ENCODE measurements at regions of chr3 and their contacts with region 1.

Region 1: DNA sequence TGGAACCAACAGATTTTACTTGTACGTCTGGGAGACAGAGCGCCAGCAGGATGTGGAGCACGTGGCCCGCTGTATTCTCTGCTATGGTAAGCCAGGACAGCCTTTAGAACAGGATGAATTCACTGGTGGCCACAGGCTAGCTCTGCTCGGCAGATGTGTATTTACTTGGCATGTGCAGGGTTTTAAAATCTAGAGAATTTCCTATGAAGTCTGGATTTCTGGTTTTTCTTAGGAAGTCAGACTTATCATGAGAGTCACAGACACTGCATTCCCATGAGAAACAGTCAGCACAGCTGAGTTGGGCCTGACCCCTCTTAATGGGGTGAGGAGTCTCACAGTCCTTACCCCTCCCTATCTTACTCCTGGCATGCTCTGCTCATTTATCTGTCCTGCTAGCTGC is 84.6 kb upstream of the COL6A5 start:
- DNase-seq: no peak
- H3K4me3 ChIP-seq: no peak overlapping the region
- H3K27me3 ChIP-seq: 0 out of 2 replicates have a peak, but pooled peaks cover 1% of the 10 kb centered on the region
- CTCF ChIP-seq: no peak

Region 2: DNA sequence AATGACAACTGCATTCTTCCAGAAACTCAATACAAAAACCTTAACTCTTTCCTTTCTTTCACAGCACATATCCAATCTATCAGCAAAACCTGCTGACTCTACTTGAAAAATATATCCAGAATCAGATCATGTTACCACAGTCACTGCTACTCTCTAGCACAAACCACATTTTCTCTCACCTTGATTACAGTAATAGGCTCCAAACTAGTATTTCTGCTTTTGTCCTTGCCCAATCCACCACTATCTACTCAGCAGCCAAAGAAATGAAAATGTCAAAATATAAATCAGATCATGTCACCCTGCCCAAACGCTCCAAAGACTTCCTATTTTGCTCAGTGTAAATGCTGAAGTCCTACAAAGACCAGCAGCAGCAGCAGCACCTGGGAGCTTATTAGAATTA is 382.5 kb before region 1 on chr3:
- CTCF ChIA-PET with region 1: no interaction called
- POLR2A ChIA-PET with region 1: no interaction called
- DNase-seq: no peak
- H3K4me3 ChIP-seq: no peak overlapping the region
- H3K27me3 ChIP-seq: no peaks in the 10 kb centered on the region
- CTCF ChIP-seq: no peak

Region 3: GRCh38 chr3:130276203-130276803 is 15.4 kb after region 1 on chr3:
- CTCF ChIA-PET with region 1: interaction called, 11 read pairs
- POLR2A ChIA-PET with region 1: no interaction called
- DNase-seq: no peak
- H3K4me3 ChIP-seq: no peak overlapping the region
- H3K27me3 ChIP-seq: peaks cover 2% of the 10 kb centered on the region; the same call in 1 of the 2 replicates
- CTCF ChIP-seq: peak; percentile 86

Region 4: GRCh38 chr3:130480736-130481135 is 219.8 kb after region 1 on chr3:
- CTCF ChIA-PET with region 1: no interaction called
- POLR2A ChIA-PET with region 1: no interaction called
- DNase-seq: no peak
- H3K4me3 ChIP-seq: no peak overlapping the region
- H3K27me3 ChIP-seq: no peaks in the 10 kb centered on the region
- CTCF ChIP-seq: peak; percentile 50